Endothelial cell of umbilical vein (primary cell): ENCODE measurements at regions of chr3 and their contacts with region 1.

Region 1: DNA sequence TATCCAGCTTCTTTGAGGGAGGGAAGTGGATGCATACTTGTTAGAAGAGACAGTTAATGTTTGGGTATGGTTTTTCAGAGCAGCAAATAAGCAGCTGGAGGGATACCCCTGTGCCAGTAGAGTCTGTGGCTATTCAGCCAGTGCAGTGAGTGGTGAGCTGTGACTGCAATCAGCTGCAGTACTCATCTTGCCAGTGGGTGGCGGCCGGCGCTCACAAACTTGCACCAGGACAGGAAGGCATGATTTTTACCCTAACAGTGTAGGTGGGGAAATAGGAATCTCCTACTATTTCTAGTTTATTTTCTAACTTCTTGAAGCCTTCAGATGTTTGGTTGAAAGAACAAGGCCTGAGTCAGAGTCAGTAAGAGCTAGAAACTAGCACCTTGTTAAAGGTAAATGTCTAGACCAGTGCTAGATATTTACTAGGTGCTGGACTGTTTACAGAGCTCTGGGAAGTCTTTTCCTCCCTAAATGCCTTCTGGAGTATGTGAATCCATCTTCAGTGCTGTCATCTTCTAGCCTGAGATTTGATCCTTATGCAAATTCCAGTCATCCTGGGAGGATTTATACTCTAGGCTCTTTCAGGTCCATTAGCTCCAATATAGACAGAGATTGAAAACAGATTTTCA is 23.6 kb downstream of the TIMP4 start:
- DNase-seq: peak; percentile 61
- H3K4me3 ChIP-seq: no peak overlapping the region
- H3K27ac ChIP-seq: no peak overlapping the region
- H3K4me1 ChIP-seq: no peaks in the 10 kb centered on the region
- H3K27me3 ChIP-seq: peaks cover 21 to 32% of the 10 kb centered on the region in 2 experiments
- CTCF ChIP-seq: peak; percentile 84 to 90
- POLR2A ChIP-seq: no peak

Region 2: DNA sequence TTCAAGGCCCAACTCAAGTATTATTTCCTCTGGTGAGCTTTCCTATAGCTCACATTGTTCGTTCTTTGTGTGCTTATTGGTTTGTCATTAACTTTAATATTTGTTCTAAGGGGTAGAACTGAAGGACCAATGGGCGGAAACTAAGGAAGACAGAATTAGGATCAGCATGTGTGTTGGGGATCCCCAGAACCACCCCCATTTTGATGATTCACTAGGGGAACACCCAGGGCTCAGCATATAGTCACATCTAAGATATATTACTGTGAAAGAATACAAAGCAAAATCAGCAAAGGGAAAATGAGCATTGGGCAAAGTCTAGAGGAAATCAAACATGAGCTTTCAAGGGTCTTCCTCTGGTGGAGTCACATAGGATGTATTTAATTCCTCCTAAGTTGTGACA is 53.3 kb before region 1 on chr3:
- CTCF ChIA-PET with region 1: no interaction called
- POLR2A ChIA-PET with region 1: no interaction called
- dilution Hi-C with region 1: no loop called
- intact Hi-C with region 1: no loop called
- DNase-seq: no peak
- H3K4me3 ChIP-seq: no peak overlapping the region
- H3K27ac ChIP-seq: no peak overlapping the region
- H3K4me1 ChIP-seq: no peaks in the 10 kb centered on the region
- H3K27me3 ChIP-seq: peaks cover 2 to 3% of the 10 kb centered on the region in 2 experiments
- CTCF ChIP-seq: no peak
- POLR2A ChIP-seq: no peak

Region 3: DNA sequence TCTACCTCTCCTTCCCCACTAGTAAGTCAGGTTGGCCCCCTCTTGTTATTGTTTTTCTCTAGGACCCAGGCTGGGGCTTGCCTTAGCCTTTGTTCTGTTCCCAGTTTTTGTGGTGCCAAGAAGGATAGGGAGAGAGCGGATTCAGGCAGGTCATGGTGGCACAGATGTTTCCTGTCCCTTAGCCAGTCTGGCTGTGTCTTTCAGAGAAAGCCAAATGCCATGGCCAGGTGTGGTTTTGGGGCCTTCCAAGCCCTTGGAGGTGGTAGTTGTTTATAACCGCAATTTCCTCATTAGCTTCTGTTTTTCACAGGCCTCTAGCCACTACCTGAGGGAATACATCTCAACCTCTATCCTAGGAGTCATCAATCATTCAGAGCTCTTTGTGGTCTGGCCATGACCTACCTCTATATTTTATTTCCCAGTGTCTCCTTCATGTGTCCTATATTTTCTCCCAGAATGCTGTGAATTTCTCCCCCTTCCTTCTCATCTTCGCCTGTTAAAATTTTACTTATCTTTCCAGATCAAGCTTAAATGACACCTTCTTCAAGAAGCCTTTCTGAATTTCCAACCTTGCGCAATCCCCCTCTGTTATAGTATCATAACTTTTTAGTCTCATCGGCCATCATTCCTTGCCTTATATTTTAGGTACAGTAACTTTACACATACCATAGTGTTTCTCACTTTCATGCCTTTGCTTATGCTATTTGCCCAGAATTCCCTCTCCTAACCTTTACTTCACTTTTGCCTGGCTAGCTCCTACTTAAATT is 14.6 kb before region 1 on chr3:
- CTCF ChIA-PET with region 1: interaction called, 13 read pairs
- POLR2A ChIA-PET with region 1: no interaction called
- dilution Hi-C with region 1: no loop called
- intact Hi-C with region 1: no loop called
- DNase-seq: peak; percentile 60
- H3K4me3 ChIP-seq: no peak overlapping the region
- H3K27ac ChIP-seq: no peak overlapping the region
- H3K4me1 ChIP-seq: no peaks in the 10 kb centered on the region
- H3K27me3 ChIP-seq: peaks cover 4 to 14% of the 10 kb centered on the region in 2 experiments
- CTCF ChIP-seq: no peak
- POLR2A ChIP-seq: no peak

Region 4: DNA sequence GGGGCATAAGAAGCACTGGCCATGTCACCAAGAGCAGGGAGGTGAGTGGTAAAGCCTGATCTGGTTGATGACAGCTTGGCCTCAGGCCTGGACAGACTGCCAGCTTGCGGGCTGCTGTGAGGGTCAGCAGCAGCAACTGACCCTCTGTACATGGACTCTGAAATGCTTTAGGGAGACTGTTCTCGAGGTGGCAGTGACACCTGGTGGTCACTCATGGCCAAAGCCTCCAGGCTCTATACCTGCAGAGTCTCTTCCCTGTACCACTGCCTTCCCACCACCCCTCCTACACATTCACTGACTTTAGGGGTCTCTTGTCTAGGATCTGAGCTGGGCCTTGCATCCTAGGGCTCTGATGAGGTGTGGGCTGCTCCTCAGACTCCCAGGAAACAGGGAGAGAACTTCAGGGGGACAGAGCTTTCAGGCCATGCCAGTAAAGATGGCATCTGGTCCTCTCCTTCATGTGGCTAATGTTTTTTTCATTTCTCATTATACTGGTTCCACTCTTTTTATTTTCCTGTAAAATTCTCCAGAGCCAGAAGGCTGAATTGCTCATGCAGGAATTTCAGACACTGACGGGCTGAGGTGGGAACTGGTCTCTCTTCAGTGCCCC is 40.8 kb after region 1 on chr3:
- CTCF ChIA-PET with region 1: interaction called, 175 read pairs
- POLR2A ChIA-PET with region 1: no interaction called
- dilution Hi-C with region 1: no loop called
- intact Hi-C with region 1: loop called (anchors 1 kb)
- DNase-seq: peak; percentile 52
- H3K4me3 ChIP-seq: no peak overlapping the region
- H3K27ac ChIP-seq: no peak overlapping the region
- H3K4me1 ChIP-seq: peaks cover 32% of the 10 kb centered on the region
- H3K27me3 ChIP-seq: no peaks in the 10 kb centered on the region
- CTCF ChIP-seq: peak; percentile 68 to 90
- POLR2A ChIP-seq: no peak

Region 5: DNA sequence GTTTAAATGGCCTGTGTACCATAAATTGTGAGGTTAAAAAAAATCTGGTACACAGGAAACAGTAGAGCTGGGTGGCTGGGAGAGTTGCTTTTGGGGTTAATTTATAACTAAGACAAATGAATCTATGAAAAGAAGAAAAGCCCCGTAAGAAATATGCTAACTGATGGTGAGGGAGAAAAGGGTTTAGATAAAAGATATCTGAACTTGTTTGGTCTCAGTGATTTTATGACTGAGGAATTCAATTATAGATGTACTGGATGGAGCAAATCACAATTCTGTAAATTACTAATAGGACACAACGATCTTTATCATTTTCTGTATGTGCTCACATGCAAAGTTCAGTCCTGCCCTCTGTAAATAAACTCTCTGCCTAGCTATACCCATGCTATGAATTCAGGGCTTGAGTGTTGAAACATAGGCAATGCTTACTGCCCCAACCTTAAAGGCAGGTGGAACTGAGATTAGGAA is 181.7 kb after region 1 on chr3:
- CTCF ChIA-PET with region 1: no interaction called
- POLR2A ChIA-PET with region 1: no interaction called
- dilution Hi-C with region 1: no loop called
- intact Hi-C with region 1: loop called (anchors 5 kb)
- DNase-seq: no peak
- H3K4me3 ChIP-seq: no peak overlapping the region
- H3K27ac ChIP-seq: no peak overlapping the region
- H3K4me1 ChIP-seq: peaks cover 10% of the 10 kb centered on the region
- H3K27me3 ChIP-seq: peaks cover 3 to 15% of the 10 kb centered on the region in 2 experiments
- CTCF ChIP-seq: no peak
- POLR2A ChIP-seq: no peak

Region 6: GRCh38 chr3:12536423-12536822 is 401.3 kb after region 1 on chr3:
- CTCF ChIA-PET with region 1: interaction called, 6 read pairs
- POLR2A ChIA-PET with region 1: no interaction called
- dilution Hi-C with region 1: no loop called
- intact Hi-C with region 1: loop called (anchors 5 kb)
- DNase-seq: no peak
- H3K4me3 ChIP-seq: no peak overlapping the region
- H3K27ac ChIP-seq: no peak overlapping the region
- H3K4me1 ChIP-seq: no peaks in the 10 kb centered on the region
- H3K27me3 ChIP-seq: no peaks in the 10 kb centered on the region
- CTCF ChIP-seq: no peak
- POLR2A ChIP-seq: no peak

Region 7: DNA sequence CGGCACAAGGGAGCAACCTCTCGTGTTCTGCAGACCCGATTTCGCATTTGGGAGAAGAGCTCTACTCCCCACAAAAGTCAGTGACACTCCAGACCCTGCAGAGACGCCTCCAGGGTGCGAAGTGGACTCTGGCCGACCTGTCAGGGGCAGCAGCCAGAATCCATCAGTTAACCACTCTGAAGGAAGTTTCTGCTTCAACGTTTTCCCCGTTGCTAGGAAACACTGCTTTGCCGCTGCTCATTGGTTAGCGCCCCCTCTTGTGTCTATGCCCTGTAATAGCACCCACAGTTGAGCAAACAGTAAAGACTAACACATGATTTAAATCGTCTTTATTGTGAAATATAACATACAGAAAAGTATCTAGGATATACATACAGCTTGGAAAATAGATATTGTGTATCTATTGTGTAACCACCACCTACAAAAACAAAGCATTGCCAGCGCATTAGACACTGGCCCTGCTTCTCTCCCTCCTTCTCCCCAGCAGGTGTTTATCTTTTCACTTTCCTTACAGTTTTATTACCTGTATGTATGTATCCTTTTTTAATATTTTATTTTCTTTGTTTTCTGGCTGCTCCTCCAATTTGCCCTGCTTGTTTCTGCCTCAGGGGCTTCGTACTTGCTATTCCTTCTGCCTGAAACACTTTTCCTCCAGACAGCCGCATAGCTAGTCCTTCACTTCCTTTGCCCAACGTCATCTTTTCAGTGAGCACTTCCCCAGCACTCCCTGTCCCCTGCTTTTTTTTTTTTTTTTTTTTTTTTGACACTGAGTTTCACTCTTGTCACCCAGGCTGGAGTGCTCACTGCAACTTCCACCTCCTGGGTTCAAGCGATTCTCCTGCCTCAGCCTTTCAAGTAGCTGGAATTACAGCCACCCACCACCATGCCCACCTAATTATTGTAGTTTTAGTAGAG is 585.1 kb after region 1 on chr3:
- CTCF ChIA-PET with region 1: interaction called, 17 read pairs
- POLR2A ChIA-PET with region 1: no interaction called
- dilution Hi-C with region 1: no loop called
- intact Hi-C with region 1: loop called (anchors 1 kb)
- DNase-seq: peak; percentile 85
- H3K4me3 ChIP-seq: no peak overlapping the region
- H3K27ac ChIP-seq: no peak overlapping the region
- H3K4me1 ChIP-seq: no peaks in the 10 kb centered on the region
- H3K27me3 ChIP-seq: no peaks in the 10 kb centered on the region
- CTCF ChIP-seq: peak; percentile 82 to 90
- POLR2A ChIP-seq: no peak